ENCODE measurements at regions of chr9 and their contacts with region 1.

Region 1: DNA sequence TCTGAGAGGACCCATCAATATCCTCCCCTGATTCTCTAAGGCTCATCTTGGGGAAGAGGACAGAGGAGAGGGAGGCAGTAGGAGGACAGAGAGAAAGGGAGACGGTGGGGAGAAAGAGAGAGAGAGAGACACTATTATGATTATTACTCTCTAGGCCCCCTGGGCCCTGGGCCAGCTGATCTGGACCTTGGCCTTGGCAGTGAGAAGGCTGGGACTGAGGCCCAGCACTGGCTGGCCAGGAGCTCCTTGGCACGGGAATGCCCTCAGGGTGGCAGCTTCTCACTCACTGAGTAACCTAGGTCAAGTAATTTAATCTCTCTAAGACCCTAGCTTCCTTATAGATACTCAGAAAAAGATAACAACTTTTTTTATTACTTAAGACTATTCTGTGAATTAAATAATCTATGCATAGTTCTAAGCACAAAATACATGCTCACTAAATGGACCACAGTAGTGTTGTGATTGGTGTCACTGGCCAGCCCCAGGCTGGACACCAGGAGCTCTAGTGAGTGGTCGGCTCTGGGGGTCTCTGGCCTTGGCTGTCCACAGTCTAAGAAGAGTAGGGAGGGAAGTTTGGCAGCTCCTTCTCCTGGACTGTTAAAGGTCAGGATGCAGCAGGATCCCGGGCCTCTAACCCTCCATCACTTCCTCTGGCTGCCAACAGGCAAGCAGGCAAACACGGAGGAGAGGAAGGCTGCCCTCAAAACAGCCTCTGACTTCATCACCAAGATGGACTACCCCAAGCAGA is 50.0 kb downstream of the GSN start:
- DNase-seq: no peak
- ATAC-seq: no peak
- H3K4me3 ChIP-seq: no peak overlapping the region
- H3K27ac ChIP-seq: no peak overlapping the region
- H3K4me1 ChIP-seq: peaks cover 32% of the 10 kb centered on the region
- H3K27me3 ChIP-seq: no peaks in the 10 kb centered on the region
- CTCF ChIP-seq: no peak

Region 2: DNA sequence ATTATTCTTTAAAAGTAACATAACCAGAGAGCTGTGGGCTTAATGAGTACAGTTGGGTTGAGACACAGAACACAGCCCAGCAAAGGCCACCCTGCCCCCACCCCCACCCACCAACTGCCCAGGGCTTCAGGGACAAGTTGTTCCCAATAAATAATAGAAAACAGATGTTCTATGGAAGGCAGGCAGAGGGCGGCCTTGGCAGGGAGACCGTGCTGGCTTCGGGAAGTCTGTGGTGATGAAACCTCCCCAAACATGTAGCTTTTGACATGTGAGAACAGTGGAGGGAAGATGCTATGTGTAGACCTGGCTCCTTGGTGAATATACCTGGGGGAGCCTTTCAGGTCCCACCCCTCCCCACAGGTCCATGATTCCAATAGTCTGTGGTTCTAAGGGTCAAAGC is 401.3 kb before region 1 on chr9:
- intact Hi-C with region 1: no loop called
- DNase-seq: no peak
- ATAC-seq: peak; percentile 22 to 49
- H3K4me3 ChIP-seq: no peak overlapping the region
- H3K27ac ChIP-seq: peak overlapping the region; percentile 31
- H3K4me1 ChIP-seq: peaks cover 39% of the 10 kb centered on the region
- H3K27me3 ChIP-seq: no peaks in the 10 kb centered on the region
- CTCF ChIP-seq: no peak

Region 3: DNA sequence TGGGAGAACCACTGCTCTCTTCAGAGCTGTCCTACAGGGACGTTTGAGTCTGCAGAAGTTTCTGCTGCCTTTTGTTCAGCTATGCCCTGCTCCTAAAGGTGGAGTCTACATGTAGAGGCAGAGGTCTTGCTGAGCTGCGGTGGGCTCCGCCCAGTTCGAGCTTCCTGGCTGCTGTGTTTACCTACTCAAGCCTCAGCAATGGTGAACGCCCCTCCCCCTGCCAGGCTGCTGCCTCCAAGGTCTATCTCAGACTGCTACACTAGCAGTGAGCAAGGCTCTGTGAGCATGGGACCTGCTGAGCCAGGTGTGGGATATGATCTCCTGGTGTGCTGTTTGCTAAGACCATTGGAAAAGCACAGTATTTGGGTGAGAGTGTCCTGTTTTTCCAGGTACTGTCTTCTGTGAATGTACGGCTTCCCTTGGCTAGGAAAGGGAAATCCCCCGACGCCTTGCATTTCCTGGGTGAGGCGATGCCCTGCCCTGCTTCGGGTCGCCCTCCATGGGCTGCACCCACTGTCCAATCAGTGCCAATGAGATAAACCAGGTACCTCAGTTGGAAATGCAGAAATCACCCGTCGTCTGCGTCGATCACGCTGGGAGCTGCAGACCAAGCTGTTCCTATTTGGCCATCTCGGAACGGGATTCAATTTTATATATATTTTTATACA is 184.6 kb before region 1 on chr9:
- intact Hi-C with region 1: no loop called
- DNase-seq: peak; percentile 77
- ATAC-seq: peak; percentile 46 to 49
- H3K4me3 ChIP-seq: no peak overlapping the region
- H3K27ac ChIP-seq: no peak overlapping the region
- H3K4me1 ChIP-seq: peaks cover 7% of the 10 kb centered on the region
- H3K27me3 ChIP-seq: no peaks in the 10 kb centered on the region
- CTCF ChIP-seq: no peak

Region 4: GRCh38 chr9:121399883-121400607 is 82.1 kb after region 1 on chr9:
- intact Hi-C with region 1: loop called (anchors 10 kb)
- DNase-seq: no peak
- ATAC-seq: peak; percentile 76 to 77
- H3K4me3 ChIP-seq: no peak overlapping the region
- H3K27ac ChIP-seq: no peak overlapping the region
- H3K4me1 ChIP-seq: no peaks in the 10 kb centered on the region
- H3K27me3 ChIP-seq: no peaks in the 10 kb centered on the region
- CTCF ChIP-seq: peak; percentile 70

Region 5: DNA sequence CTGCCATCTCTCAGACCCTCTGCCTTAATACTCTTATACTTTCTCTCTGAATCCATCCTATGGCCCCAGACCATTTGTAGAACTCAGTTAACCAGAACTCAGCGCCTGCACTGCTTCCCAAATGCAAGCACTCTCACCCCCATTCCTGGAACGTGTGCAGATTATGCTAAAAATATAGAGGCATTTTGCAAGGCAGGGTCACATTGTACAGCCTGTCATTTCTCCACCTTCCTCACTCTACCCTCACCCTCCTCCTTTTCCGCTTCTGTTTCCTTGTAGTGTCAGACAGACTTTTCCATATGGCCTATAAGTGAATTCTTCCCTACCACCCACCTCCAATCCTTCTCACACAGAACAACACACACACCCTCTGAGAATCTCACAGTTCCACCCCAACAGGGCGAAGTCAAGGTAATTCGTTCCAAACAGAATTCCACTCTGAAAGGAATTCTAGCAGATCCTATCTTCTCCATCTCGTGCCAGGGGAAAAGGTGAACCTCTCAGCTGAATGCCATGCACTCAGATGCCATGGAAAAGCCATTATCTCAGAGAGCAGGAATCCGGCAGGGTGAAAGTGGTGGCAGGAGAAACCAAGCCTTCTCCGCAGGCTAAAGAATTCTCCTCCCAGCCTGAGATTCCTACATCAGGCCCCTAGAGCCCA is 156.4 kb after region 1 on chr9:
- intact Hi-C with region 1: no loop called
- DNase-seq: no peak
- ATAC-seq: peak in 1 of 2 donors; percentile 63
- H3K4me3 ChIP-seq: no peak overlapping the region
- H3K27ac ChIP-seq: no peak overlapping the region
- H3K4me1 ChIP-seq: no peaks in the 10 kb centered on the region
- H3K27me3 ChIP-seq: no peaks in the 10 kb centered on the region
- CTCF ChIP-seq: no peak

Region 6: DNA sequence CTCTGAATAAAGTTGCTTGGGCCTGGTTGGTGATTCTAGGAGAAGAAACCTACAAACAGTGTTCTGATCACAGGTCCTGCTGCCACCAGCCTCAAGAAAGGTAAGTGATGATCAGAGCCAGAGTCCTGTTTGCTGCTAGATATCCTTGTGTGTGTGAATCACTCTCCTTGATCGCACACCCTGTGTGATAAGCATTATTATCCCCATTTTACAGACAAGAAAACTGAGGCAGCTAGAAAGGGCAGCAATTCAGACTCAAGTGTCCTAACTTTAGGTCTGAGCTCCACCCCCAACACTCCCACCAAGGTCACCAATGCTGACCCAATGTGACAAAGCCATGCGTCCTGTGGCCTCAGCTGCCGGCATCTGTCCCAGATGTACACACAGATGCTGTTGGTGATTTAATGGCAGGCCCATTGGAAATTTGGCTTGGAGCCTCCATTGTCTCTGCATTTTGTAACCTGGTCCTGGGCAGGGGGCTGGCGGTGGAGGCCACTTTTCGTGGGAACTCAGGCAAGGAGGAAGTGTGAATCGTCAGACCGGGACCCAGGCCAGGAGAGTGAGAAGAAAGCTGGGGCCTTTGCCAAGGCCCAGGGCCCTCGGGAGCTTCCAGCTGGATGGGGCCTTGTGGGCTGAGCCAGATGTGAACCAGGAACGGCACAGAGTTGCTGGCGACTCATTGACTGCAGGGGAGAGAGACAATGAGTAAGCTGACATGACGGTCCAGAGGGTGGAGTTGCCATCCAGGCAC is 211.5 kb after region 1 on chr9:
- intact Hi-C with region 1: no loop called
- DNase-seq: peak; percentile 79
- ATAC-seq: peak; percentile 69 to 81
- H3K4me3 ChIP-seq: no peak overlapping the region
- H3K27ac ChIP-seq: peak overlapping the region; percentile 14
- H3K4me1 ChIP-seq: no peaks in the 10 kb centered on the region
- H3K27me3 ChIP-seq: no peaks in the 10 kb centered on the region
- CTCF ChIP-seq: no peak